Activated naive CD4-positive, alpha-beta T cell treated with anti-CD3 and anti-CD28 coated beads for 36 hours (primary cell): ENCODE measurements at regions of chr6 and their contacts with region 1.

Region 1: DNA sequence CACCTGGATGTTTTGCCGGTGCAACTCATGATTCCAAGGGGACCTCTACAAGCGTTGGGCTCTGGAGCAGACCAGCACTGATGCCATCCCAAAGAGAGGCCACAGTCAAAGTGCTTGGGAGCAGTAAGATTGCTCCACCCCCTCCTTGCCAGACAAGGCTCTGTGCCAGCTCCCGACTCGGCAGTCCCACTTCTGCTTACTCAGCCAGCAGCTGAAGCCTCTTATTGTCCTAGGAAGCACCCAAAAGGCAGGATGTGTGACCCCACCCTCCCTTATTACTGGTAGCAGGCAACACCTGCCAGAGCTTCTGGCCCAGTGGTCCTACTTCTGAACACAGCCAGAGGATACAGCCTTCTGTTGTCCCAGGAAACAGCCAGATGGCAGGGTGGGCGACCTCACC is 614.2 kb downstream of the TENT5A start:
- DNase-seq: no peak
- H3K4me3 Mint-ChIP-seq: no peak overlapping the region
- H3K27ac Mint-ChIP-seq: no peak overlapping the region
- H3K4me1 Mint-ChIP-seq: no peaks in the 10 kb centered on the region
- H3K27me3 Mint-ChIP-seq: no peaks in the 10 kb centered on the region

Region 2: GRCh38 chr6:81086991-81087390 is 51.2 kb before region 1 on chr6:
- CTCF ChIA-PET with region 1: no interaction called
- intact Hi-C with region 1: loop called (anchors 1 kb)
- DNase-seq: no peak
- H3K4me3 Mint-ChIP-seq: no peak overlapping the region
- H3K27ac Mint-ChIP-seq: no peak overlapping the region
- H3K4me1 Mint-ChIP-seq: no peaks in the 10 kb centered on the region
- H3K27me3 Mint-ChIP-seq: no peaks in the 10 kb centered on the region

Region 3: GRCh38 chr6:81625216-81625615 is 487.0 kb after region 1 on chr6:
- CTCF ChIA-PET with region 1: no interaction called
- intact Hi-C with region 1: no loop called
- DNase-seq: no peak
- H3K4me3 Mint-ChIP-seq: no peak overlapping the region
- H3K27ac Mint-ChIP-seq: no peak overlapping the region
- H3K4me1 Mint-ChIP-seq: no peaks in the 10 kb centered on the region
- H3K27me3 Mint-ChIP-seq: no peaks in the 10 kb centered on the region